Left cardiac atrium (tissue), 4 donors: ENCODE measurements at regions of chr11 and their contacts with region 1.

Region 1: GRCh38 chr11:128039140-128040021 is 548.0 kb downstream of the ETS1 start:
- DNase-seq: peak; percentile 33
- ATAC-seq: peak; percentile 81 to 93

Region 2: GRCh38 chr11:128157423-128158298 is 118.3 kb after region 1 on chr11:
- intact Hi-C with region 1: loop called (anchors 5 kb)
- DNase-seq: peak; percentile 29
- ATAC-seq: peak; percentile 83 to 88